ENCODE measurements at regions of chr6 and their contacts with region 1.

Region 1: GRCh38 chr6:34161857-34162515 is 16.1 kb upstream of the GRM4 start:
- DNase-seq: no peak
- H3K4me3 ChIP-seq: no peak overlapping the region
- H3K4me3 Mint-ChIP-seq: no peak overlapping the region
- H3K27ac ChIP-seq: no peak overlapping the region
- H3K27ac Mint-ChIP-seq: peak overlapping the region in 1 of 7 donors; percentile 5
- H3K4me1 ChIP-seq: no peaks in the 10 kb centered on the region
- H3K4me1 Mint-ChIP-seq: peaks cover 4% of the 10 kb centered on the region
- H3K27me3 ChIP-seq: peaks cover 0 to 4% of the 10 kb centered on the region in 2 donors
- H3K27me3 Mint-ChIP-seq: peaks cover 7 to 39% (median 11%) of the 10 kb centered on the region in 3 donors
- CTCF ChIP-seq: no peak

Region 2: GRCh38 chr6:34414999-34415858 is 253.2 kb after region 1 on chr6:
- intact Hi-C with region 1: loop called (anchors 2 to 10 kb)
- DNase-seq: peak; percentile 71 to 84 (median 79)
- H3K4me3 ChIP-seq: no peak overlapping the region
- H3K4me3 Mint-ChIP-seq: no peak overlapping the region
- H3K27ac ChIP-seq: peak overlapping the region in 1 of 2 donors; percentile 47
- H3K27ac Mint-ChIP-seq: peak overlapping the region in 5 of 7 donors; percentile 37 to 75 (median 61)
- H3K4me1 ChIP-seq: peaks cover 0 to 4% of the 10 kb centered on the region in 2 donors
- H3K4me1 Mint-ChIP-seq: peaks cover 7% of the 10 kb centered on the region
- H3K27me3 ChIP-seq: no peaks in the 10 kb centered on the region
- H3K27me3 Mint-ChIP-seq: no peaks in the 10 kb centered on the region
- CTCF ChIP-seq: peak; percentile 80

Region 3: GRCh38 chr6:34602318-34603111 is 440.5 kb after region 1 on chr6:
- intact Hi-C with region 1: loop called (anchors 5 to 10 kb)
- DNase-seq: no peak
- H3K4me3 ChIP-seq: no peak overlapping the region
- H3K4me3 Mint-ChIP-seq: no peak overlapping the region
- H3K27ac ChIP-seq: no peak overlapping the region
- H3K27ac Mint-ChIP-seq: no peak overlapping the region
- H3K4me1 ChIP-seq: no peaks in the 10 kb centered on the region
- H3K4me1 Mint-ChIP-seq: peaks cover 5% of the 10 kb centered on the region
- H3K27me3 ChIP-seq: no peaks in the 10 kb centered on the region
- H3K27me3 Mint-ChIP-seq: no peaks in the 10 kb centered on the region
- CTCF ChIP-seq: no peak

Region 4: DNA sequence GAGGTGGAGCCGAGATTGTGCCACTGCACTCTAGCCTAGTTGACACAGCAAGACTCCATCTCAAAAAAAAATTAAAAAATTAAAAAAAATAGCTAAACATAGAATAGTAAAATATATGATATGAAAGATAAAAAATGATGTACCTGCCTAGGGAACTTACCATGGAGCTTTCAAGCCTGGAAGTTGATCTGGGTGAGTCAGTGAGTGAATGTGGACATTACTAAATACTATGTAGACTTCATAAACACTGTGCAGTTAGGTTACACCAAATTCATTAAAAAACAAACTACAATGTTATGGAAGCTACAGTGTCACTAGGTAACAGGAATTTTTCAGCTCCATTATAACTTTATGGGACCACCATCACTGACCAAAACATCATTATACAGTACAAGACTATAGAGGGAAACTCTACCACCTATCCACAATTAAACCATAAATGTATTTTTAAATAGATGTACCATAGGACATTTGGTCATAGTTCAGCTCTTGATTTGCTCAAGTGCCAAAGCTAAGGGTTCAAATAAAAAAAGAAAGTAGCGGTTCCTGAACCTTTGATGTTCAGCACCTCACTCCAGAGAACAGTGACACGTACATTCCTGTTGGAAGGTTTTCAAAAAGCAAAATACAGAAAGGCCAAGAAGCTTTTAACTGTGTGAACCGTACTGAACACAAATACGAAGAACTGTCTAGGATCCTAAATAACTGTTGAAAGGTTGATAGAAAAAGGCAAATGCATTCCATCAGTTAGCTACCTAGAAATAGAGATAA is 446.5 kb after region 1 on chr6:
- intact Hi-C with region 1: loop called (anchors 5 to 10 kb)
- DNase-seq: no peak
- H3K4me3 ChIP-seq: no peak overlapping the region
- H3K4me3 Mint-ChIP-seq: no peak overlapping the region
- H3K27ac ChIP-seq: no peak overlapping the region
- H3K27ac Mint-ChIP-seq: no peak overlapping the region
- H3K4me1 ChIP-seq: no peaks in the 10 kb centered on the region
- H3K4me1 Mint-ChIP-seq: peaks cover 3% of the 10 kb centered on the region
- H3K27me3 ChIP-seq: no peaks in the 10 kb centered on the region
- H3K27me3 Mint-ChIP-seq: no peaks in the 10 kb centered on the region
- CTCF ChIP-seq: no peak

Measured in CD14-positive monocyte (primary cell).